GM10248 (cell line): ENCODE measurements at regions of chr11 and their contacts with region 1.

Region 1: GRCh38 chr11:31958076-31958735 is 132.7 kb upstream of the RCN1 start:
- DNase-seq: peak; percentile 77
- CTCF ChIP-seq: peak; percentile 89

Region 2: GRCh38 chr11:31107062-31107461 is 851.1 kb before region 1 on chr11:
- CTCF ChIA-PET with region 1: interaction called, 21 read pairs
- POLR2A ChIA-PET with region 1: no interaction called
- DNase-seq: peak; percentile 26
- CTCF ChIP-seq: peak; percentile 60

Region 3: GRCh38 chr11:31397239-31397834 is 560.9 kb before region 1 on chr11:
- CTCF ChIA-PET with region 1: interaction called, 21 read pairs
- POLR2A ChIA-PET with region 1: no interaction called
- DNase-seq: peak; percentile 21
- CTCF ChIP-seq: peak; percentile 37

Region 4: GRCh38 chr11:31921081-31921480 is 37.1 kb before region 1 on chr11:
- CTCF ChIA-PET with region 1: interaction called, 15 read pairs
- POLR2A ChIA-PET with region 1: no interaction called
- DNase-seq: no peak
- CTCF ChIP-seq: no peak

Region 5: GRCh38 chr11:31968461-31969358 is 10.5 kb after region 1 on chr11:
- CTCF ChIA-PET with region 1: interaction called, 49 read pairs
- POLR2A ChIA-PET with region 1: no interaction called
- DNase-seq: no peak
- CTCF ChIP-seq: no peak

Region 6: DNA sequence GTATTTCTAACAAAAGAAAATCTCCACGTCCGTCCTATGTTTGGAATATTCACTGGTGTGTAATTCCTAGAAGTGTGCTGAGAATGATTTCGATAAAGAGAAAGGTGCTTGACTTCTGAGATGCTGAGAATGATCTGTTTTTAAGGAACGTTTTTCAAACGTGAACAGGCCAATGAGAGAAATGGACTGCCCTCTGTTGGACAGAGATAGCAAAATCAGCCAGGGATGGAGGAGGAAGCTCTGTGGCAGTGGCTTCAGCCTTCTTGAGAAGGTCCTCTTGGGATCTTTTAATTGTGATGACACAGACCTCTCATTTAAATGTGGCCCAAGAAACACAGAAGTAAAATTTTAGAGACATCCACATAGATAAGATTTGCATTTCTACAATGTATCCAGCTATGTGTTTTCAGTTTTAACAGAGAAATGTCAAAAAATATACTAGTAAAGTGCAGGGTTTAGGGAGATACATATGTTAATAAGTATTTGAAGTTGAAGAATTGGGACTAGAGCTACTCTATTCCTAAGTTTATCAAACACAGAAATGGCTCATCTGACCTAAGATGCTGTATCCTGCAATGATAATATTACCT is 48.7 kb after region 1 on chr11:
- CTCF ChIA-PET with region 1: interaction called, 11 read pairs
- POLR2A ChIA-PET with region 1: no interaction called
- DNase-seq: peak; percentile 52
- CTCF ChIP-seq: peak; percentile 74